ENCODE measurements at regions of chr2 and their contacts with region 1.

Region 1: DNA sequence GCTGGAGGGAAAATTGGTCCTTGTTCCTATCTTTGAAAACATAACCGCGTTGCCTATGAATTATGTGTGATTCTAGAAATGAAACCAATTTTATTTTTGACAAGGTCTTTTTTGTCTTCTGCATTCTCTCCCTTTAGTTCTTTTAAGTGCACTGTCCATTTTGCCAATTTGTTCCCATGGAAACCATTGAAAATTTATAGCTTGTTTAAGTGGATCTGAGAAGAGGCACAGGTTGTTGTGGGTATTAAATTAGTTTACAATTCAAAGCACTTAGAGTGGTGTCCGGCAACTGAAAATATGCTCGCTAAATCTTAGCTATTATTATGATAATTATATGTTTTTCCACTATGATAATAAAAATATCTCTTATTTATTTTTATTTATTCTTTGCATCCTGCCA is 107.5 kb upstream of the FSHR start:
- DNase-seq: no peak
- ATAC-seq: no peak
- H3K4me3 ChIP-seq: no peak overlapping the region
- H3K4me3 Mint-ChIP-seq: no peak overlapping the region
- H3K27ac ChIP-seq: no peak overlapping the region
- H3K27ac Mint-ChIP-seq: no peak overlapping the region
- H3K4me1 ChIP-seq: no peaks in the 10 kb centered on the region
- H3K4me1 Mint-ChIP-seq: no peaks in the 10 kb centered on the region
- H3K27me3 ChIP-seq: no peaks in the 10 kb centered on the region
- H3K27me3 Mint-ChIP-seq: no peaks in the 10 kb centered on the region
- CTCF ChIP-seq: no peak

Region 2: GRCh38 chr2:48946449-48947048 is 315.2 kb before region 1 on chr2:
- CTCF ChIA-PET with region 1: no interaction called
- POLR2A ChIA-PET with region 1: no interaction called
- intact Hi-C with region 1: no loop called
- DNase-seq: peak in 6 of 9 experiments; percentile 4 to 46 (median 11)
- ATAC-seq: peak; percentile 71
- H3K4me3 ChIP-seq: no peak overlapping the region
- H3K4me3 Mint-ChIP-seq: no peak overlapping the region
- H3K27ac ChIP-seq: no peak overlapping the region
- H3K27ac Mint-ChIP-seq: no peak overlapping the region
- H3K4me1 ChIP-seq: no peaks in the 10 kb centered on the region
- H3K4me1 Mint-ChIP-seq: no peaks in the 10 kb centered on the region
- H3K27me3 ChIP-seq: no peaks in the 10 kb centered on the region
- H3K27me3 Mint-ChIP-seq: no peaks in the 10 kb centered on the region
- CTCF ChIP-seq: peak; percentile 86

Region 3: GRCh38 chr2:49042510-49042909 is 219.3 kb before region 1 on chr2:
- CTCF ChIA-PET with region 1: no interaction called
- POLR2A ChIA-PET with region 1: no interaction called
- intact Hi-C with region 1: no loop called
- DNase-seq: no peak
- ATAC-seq: no peak
- H3K4me3 ChIP-seq: no peak overlapping the region
- H3K4me3 Mint-ChIP-seq: no peak overlapping the region
- H3K27ac ChIP-seq: no peak overlapping the region
- H3K27ac Mint-ChIP-seq: no peak overlapping the region
- H3K4me1 ChIP-seq: no peaks in the 10 kb centered on the region
- H3K4me1 Mint-ChIP-seq: no peaks in the 10 kb centered on the region
- H3K27me3 ChIP-seq: no peaks in the 10 kb centered on the region
- H3K27me3 Mint-ChIP-seq: no peaks in the 10 kb centered on the region
- CTCF ChIP-seq: no peak

Region 4: GRCh38 chr2:49248506-49248905 is 13.3 kb before region 1 on chr2:
- CTCF ChIA-PET with region 1: no interaction called
- POLR2A ChIA-PET with region 1: no interaction called
- intact Hi-C with region 1: loop called in 1 of 2 experiments (anchors 1 kb)
- DNase-seq: no peak
- ATAC-seq: no peak
- H3K4me3 ChIP-seq: no peak overlapping the region
- H3K4me3 Mint-ChIP-seq: no peak overlapping the region
- H3K27ac ChIP-seq: no peak overlapping the region
- H3K27ac Mint-ChIP-seq: no peak overlapping the region
- H3K4me1 ChIP-seq: no peaks in the 10 kb centered on the region
- H3K4me1 Mint-ChIP-seq: no peaks in the 10 kb centered on the region
- H3K27me3 ChIP-seq: no peaks in the 10 kb centered on the region
- H3K27me3 Mint-ChIP-seq: no peaks in the 10 kb centered on the region
- CTCF ChIP-seq: no peak

Measured in CD8-positive, alpha-beta T cell (primary cell).